HCT116 (cell line): ENCODE measurements at regions of chr16 and their contacts with region 1.

Region 1: DNA sequence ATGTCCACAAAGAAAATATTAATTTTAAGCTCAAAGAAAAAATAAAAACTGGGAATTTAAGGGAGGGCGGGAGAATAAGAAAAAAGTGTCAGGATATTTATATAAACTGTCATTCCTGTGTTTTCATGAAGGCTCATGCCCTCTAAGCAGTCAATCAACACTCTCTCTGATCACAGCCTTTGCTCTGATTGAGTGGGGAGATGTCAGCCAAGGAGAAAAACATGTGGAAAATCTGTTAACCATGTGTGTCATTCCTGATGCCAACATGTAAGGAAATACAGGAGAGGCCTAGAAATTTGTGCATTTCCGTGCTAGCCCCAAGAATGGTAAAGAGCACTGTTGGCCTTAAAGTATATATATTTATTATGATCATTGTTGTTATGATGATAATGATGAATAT is 137.9 kb upstream of the IRX5 start:
- DNase-seq: no peak
- ATAC-seq: no peak
- H3K4me3 ChIP-seq: no peak overlapping the region
- H3K27ac ChIP-seq: no peak overlapping the region
- H3K4me1 ChIP-seq: no peaks in the 10 kb centered on the region
- H3K27me3 ChIP-seq: peaks cover 3% of the 10 kb centered on the region; the same call in 1 of the 2 replicates
- CTCF ChIP-seq: no peak
- POLR2A ChIP-seq: no peak
- RAD21 ChIP-seq: no peak

Region 2: DNA sequence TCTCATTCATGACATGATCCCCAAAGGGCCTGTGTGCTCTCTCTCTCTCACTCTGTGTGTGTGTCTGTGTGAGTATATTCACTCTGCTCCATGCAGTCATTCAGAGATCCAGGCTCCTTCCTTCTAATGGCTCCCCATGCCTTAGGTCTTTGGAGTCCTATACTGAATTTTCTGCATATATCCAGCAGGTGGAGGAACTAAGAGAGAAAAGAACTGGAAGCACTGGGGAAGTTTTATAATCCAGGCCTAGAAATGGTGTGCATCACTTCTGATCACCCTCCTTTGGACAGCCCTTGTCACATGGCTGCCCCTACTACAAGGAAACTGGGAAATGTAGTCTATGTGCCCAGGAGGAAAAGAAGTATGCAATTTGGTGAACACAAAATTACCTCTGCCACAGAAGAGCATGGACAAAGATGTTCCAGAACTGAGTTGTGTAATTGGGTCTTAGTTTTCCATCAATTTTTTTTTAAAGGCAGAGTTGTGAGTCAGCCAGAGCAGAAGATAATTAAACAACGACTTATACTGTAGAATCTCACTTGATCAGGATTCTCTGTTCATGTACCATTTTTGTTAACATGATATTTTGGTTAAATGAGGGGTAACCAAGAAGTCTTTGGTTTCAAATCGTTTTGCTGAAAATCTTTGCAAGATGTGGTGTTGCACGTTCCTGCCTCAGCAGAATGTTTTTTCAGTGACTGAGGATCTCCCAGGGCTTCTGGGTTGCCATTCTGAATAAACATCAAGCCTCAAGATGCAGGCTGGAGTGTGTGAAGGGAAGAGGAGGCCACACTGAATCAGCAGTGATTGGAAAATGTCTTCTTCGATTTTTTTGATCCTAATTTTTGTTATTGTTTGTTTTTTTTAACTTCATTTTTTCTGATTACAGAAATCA is 273.8 kb before region 1 on chr16:
- CTCF ChIA-PET with region 1: no interaction called
- POLR2A ChIA-PET with region 1: no interaction called
- RAD21 ChIA-PET with region 1: no interaction called
- intact Hi-C with region 1: no loop called
- DNase-seq: no peak
- ATAC-seq: no peak
- H3K4me3 ChIP-seq: no peak overlapping the region
- H3K27ac ChIP-seq: no peak overlapping the region
- H3K4me1 ChIP-seq: no peaks in the 10 kb centered on the region
- H3K27me3 ChIP-seq: peaks cover 16% of the 10 kb centered on the region
- CTCF ChIP-seq: no peak
- POLR2A ChIP-seq: no peak
- RAD21 ChIP-seq: no peak

Region 3: DNA sequence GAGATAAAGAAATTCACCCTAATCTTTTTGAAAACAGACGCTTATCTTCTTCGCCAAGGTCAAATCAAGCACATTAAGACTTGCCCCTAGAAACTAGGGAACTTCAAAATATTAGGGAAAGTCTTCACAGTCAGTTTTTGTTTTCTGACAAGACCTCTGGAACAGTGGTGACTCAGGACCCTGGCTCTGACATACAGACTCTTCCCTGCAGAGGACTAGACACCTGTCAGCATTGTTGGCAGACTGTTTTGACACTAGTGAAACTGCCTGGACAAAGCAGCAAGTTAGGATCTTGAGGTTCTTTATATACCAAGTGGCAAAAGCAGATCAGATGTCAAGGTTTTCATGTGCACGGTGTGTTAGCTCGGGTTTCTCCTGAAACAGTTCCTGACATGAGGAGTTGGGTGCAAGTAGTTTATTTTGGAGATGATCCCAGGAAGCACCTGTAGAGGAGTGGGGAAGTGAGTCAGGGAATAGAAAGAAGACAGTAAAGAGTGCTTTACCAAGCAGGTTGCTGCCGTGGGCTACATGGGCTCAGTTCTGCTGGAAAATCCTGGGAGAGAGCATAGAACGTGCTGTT is 44.1 kb before region 1 on chr16:
- CTCF ChIA-PET with region 1: no interaction called
- POLR2A ChIA-PET with region 1: no interaction called
- RAD21 ChIA-PET with region 1: no interaction called
- intact Hi-C with region 1: no loop called
- DNase-seq: no peak
- ATAC-seq: no peak
- H3K4me3 ChIP-seq: no peak overlapping the region
- H3K27ac ChIP-seq: no peak overlapping the region
- H3K4me1 ChIP-seq: no peaks in the 10 kb centered on the region
- H3K27me3 ChIP-seq: peaks cover 38% of the 10 kb centered on the region
- CTCF ChIP-seq: no peak
- POLR2A ChIP-seq: no peak
- RAD21 ChIP-seq: no peak

Region 4: DNA sequence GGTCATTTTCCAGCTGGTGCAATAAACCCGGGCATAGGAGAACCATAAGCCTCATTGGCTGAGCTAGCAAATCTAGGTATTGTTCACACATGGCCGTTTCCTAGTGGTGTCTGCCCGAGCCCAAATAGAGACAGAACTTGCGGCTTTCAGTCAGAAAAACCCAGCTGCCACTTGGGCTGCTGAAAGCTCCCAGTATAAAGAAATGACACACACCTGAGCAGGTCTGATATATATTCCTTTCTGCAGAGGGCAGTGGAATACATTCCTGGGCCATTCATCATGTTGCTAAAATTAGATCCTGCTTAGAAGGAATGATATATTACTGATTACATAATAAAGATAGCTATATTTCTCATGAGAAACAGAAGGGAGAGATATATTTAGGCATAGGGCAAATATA is 54.0 kb after region 1 on chr16:
- CTCF ChIA-PET with region 1: no interaction called
- POLR2A ChIA-PET with region 1: no interaction called
- RAD21 ChIA-PET with region 1: no interaction called
- intact Hi-C with region 1: loop called (anchors 2 kb)
- DNase-seq: no peak
- ATAC-seq: peak; percentile 66
- H3K4me3 ChIP-seq: no peak overlapping the region
- H3K27ac ChIP-seq: no peak overlapping the region
- H3K4me1 ChIP-seq: peaks cover 12 to 14% of the 10 kb centered on the region in 2 experiments
- H3K27me3 ChIP-seq: no peaks in the 10 kb centered on the region
- CTCF ChIP-seq: no peak
- POLR2A ChIP-seq: no peak
- RAD21 ChIP-seq: no peak